ENCODE measurements at regions of chr7 and their contacts with region 1.

Region 1: DNA sequence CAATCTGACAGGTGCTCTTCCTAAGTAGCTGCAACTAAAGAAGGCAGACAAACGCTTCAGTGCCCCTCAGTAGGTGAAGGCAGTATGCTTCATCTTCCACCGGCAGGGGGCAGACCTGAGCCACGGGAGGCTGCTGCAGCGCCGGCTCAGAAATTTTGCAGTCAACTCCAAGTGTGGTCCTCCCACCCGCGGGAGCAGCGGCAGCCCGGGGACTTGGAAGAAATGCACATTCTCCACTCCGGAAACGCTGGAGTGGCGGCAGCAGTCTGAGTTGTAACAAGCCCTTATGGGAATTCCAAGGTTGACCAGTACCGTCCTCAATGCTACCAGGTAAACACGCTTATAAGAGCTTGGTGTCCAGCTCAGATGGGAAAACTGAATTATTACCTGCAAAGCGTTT is 3.4 kb downstream of the IGFBP3 start:
- DNase-seq: peak; percentile 62 to 88
- H3K4me3 ChIP-seq: peak overlapping the region; percentile 84
- H3K27ac ChIP-seq: no peak overlapping the region
- H3K4me1 ChIP-seq: peaks cover 21% of the 10 kb centered on the region
- H3K27me3 ChIP-seq: no peaks in the 10 kb centered on the region
- CTCF ChIP-seq: peak; percentile 100

Region 2: GRCh38 chr7:45890902-45891461 is 26.7 kb before region 1 on chr7:
- CTCF ChIA-PET with region 1: interaction called, 5 read pairs
- POLR2A ChIA-PET with region 1: interaction called, 6 read pairs
- intact Hi-C with region 1: loop called (anchors 1 kb)
- DNase-seq: peak in 1 of 2 experiments; percentile 50
- H3K4me3 ChIP-seq: no peak overlapping the region
- H3K27ac ChIP-seq: no peak overlapping the region
- H3K4me1 ChIP-seq: peaks cover 30% of the 10 kb centered on the region
- H3K27me3 ChIP-seq: no peaks in the 10 kb centered on the region
- CTCF ChIP-seq: peak; percentile 98

Region 3: DNA sequence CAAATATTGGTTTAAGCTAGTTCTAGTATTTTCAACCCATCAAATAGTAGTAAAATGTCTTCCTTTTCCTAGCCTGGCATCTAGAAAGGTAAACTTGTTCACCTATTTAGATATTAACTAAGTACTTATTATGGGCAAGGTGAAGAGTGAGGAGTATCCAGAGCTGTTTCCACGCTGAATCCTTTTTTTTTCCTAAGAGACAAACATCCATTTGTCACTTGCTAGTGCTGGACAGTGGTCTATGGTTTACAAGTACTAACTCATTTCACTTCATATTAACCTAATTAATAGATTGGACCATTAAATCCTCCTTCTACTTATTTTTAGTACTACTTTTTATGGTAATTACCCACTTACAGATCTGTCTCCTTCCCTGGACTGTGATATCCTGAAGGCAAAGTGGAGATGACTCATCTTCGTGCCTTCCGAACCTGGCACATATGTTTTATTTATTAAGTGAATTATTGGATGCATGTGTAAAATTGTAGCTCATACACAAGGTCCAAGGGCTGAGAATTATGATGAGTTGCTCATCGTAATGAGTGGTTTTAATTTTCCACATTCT is 163.0 kb after region 1 on chr7:
- CTCF ChIA-PET with region 1: no interaction called
- POLR2A ChIA-PET with region 1: no interaction called
- intact Hi-C with region 1: no loop called
- DNase-seq: no peak
- H3K4me3 ChIP-seq: no peak overlapping the region
- H3K27ac ChIP-seq: no peak overlapping the region
- H3K4me1 ChIP-seq: no peaks in the 10 kb centered on the region
- H3K27me3 ChIP-seq: no peaks in the 10 kb centered on the region
- CTCF ChIP-seq: no peak

Region 4: GRCh38 chr7:46603780-46604179 is 686.1 kb after region 1 on chr7:
- CTCF ChIA-PET with region 1: interaction called, 12 read pairs
- POLR2A ChIA-PET with region 1: no interaction called
- intact Hi-C with region 1: no loop called
- DNase-seq: no peak
- H3K4me3 ChIP-seq: no peak overlapping the region
- H3K27ac ChIP-seq: no peak overlapping the region
- H3K4me1 ChIP-seq: no peaks in the 10 kb centered on the region
- H3K27me3 ChIP-seq: no peaks in the 10 kb centered on the region
- CTCF ChIP-seq: no peak

Region 5: GRCh38 chr7:47179812-47180515 is 1262.3 kb after region 1 on chr7:
- CTCF ChIA-PET with region 1: no interaction called
- POLR2A ChIA-PET with region 1: interaction called, 5 read pairs
- intact Hi-C with region 1: loop called (anchors 1 kb)
- DNase-seq: peak; percentile 44 to 75
- H3K4me3 ChIP-seq: no peak overlapping the region
- H3K27ac ChIP-seq: no peak overlapping the region
- H3K4me1 ChIP-seq: no peaks in the 10 kb centered on the region
- H3K27me3 ChIP-seq: peaks cover 8% of the 10 kb centered on the region; the same call in 1 of the 2 replicates
- CTCF ChIP-seq: peak; percentile 97